OCI-LY7 (cell line): ENCODE measurements at regions of chr1 and their contacts with region 1.

Region 1: GRCh38 chr1:152189657-152190442 is 30.8 kb upstream of the RPTN start:
- DNase-seq: peak; percentile 48
- H3K4me3 ChIP-seq: no peak overlapping the region
- H3K27ac ChIP-seq: no peak overlapping the region
- H3K4me1 ChIP-seq: no peaks in the 10 kb centered on the region
- CTCF ChIP-seq: peak; percentile 86

Region 2: DNA sequence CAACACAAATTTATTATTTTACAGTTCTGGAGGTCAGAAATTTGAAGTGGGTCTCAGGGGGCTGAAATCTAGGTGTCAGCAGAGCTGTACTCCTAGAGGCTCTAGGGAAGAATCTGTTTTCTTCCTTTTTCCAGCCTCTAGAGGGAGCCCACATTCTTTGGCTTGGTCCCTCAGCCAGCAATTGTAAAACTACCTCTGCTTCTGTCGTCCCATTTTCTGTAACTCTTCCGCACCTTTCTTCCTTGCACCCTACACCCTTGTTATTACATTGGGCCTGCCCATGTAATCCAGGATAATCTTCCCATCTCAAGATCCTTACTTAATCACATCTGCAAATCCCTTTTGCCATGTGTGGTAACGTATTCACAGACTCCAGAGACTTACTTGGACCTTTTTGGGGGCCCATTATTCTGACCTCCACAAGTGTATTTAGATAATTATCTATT is 255.8 kb before region 1 on chr1:
- CTCF ChIA-PET with region 1: no interaction called
- POLR2A ChIA-PET with region 1: no interaction called
- intact Hi-C with region 1: loop called (anchors 10 kb)
- DNase-seq: peak; percentile 64
- H3K4me3 ChIP-seq: no peak overlapping the region
- H3K27ac ChIP-seq: no peak overlapping the region
- H3K4me1 ChIP-seq: peaks cover 6% of the 10 kb centered on the region
- CTCF ChIP-seq: peak; percentile 90

Region 3: GRCh38 chr1:152047730-152048402 is 142.0 kb before region 1 on chr1:
- CTCF ChIA-PET with region 1: interaction called, 3 read pairs
- POLR2A ChIA-PET with region 1: no interaction called
- intact Hi-C with region 1: loop called (anchors 1 kb)
- DNase-seq: peak; percentile 86
- H3K4me3 ChIP-seq: peak overlapping the region; percentile 14
- H3K27ac ChIP-seq: peak overlapping the region; percentile 63
- H3K4me1 ChIP-seq: peaks cover 17% of the 10 kb centered on the region
- CTCF ChIP-seq: peak; percentile 88

Region 4: GRCh38 chr1:152130186-152130585 is 59.7 kb before region 1 on chr1:
- CTCF ChIA-PET with region 1: no interaction called
- POLR2A ChIA-PET with region 1: no interaction called
- intact Hi-C with region 1: no loop called
- DNase-seq: no peak
- H3K4me3 ChIP-seq: no peak overlapping the region
- H3K27ac ChIP-seq: no peak overlapping the region
- H3K4me1 ChIP-seq: no peaks in the 10 kb centered on the region
- CTCF ChIP-seq: no peak

Region 5: DNA sequence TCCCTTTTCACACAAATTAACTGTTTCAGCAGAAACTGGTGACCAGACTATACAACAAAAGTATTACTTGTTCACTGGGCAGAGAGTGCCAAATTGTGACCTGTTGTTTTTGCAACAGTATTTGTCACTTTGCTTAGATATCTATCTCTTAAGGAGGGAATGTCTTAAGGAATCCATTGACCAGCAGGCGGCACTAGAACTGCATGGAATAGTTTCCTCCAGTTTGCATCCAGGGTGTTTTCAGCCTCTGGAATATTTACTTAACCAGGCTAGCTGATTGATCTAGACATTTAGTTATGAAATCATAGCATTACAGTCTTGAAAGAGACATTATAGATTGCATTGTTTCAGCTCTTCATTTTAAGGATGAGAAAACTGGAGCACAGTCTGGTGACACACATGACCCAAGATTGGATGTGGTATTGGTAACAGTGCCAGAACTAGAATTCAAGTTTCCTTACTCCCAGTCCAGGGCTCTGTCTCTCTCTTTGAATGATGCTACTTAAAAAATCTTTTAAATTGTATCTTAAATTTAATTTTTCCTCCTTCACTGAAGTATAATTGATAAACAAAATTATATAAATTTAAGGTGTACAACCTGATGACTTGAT is 47.8 kb before region 1 on chr1:
- CTCF ChIA-PET with region 1: no interaction called
- POLR2A ChIA-PET with region 1: no interaction called
- intact Hi-C with region 1: loop called (anchors 2 kb)
- DNase-seq: peak; percentile 24
- H3K4me3 ChIP-seq: no peak overlapping the region
- H3K27ac ChIP-seq: no peak overlapping the region
- H3K4me1 ChIP-seq: no peaks in the 10 kb centered on the region
- CTCF ChIP-seq: peak; percentile 79

Region 6: GRCh38 chr1:152218762-152219427 is 29.0 kb after region 1 on chr1:
- CTCF ChIA-PET with region 1: no interaction called
- POLR2A ChIA-PET with region 1: no interaction called
- intact Hi-C with region 1: no loop called
- DNase-seq: no peak
- H3K4me3 ChIP-seq: no peak overlapping the region
- H3K27ac ChIP-seq: no peak overlapping the region
- H3K4me1 ChIP-seq: no peaks in the 10 kb centered on the region
- CTCF ChIP-seq: no peak

Region 7: GRCh38 chr1:152440635-152441471 is 251.0 kb after region 1 on chr1:
- CTCF ChIA-PET with region 1: no interaction called
- POLR2A ChIA-PET with region 1: no interaction called
- intact Hi-C with region 1: loop called (anchors 5 kb)
- DNase-seq: peak; percentile 79
- H3K4me3 ChIP-seq: no peak overlapping the region
- H3K27ac ChIP-seq: no peak overlapping the region
- H3K4me1 ChIP-seq: no peaks in the 10 kb centered on the region
- CTCF ChIP-seq: peak; percentile 86

Region 8: GRCh38 chr1:152459596-152460528 is 270.0 kb after region 1 on chr1:
- CTCF ChIA-PET with region 1: interaction called, 5 read pairs
- POLR2A ChIA-PET with region 1: no interaction called
- intact Hi-C with region 1: loop called (anchors 1 kb)
- DNase-seq: peak; percentile 77
- H3K4me3 ChIP-seq: peak overlapping the region; percentile 9
- H3K27ac ChIP-seq: no peak overlapping the region
- H3K4me1 ChIP-seq: peaks cover 5% of the 10 kb centered on the region
- CTCF ChIP-seq: peak; percentile 96

Region 9: DNA sequence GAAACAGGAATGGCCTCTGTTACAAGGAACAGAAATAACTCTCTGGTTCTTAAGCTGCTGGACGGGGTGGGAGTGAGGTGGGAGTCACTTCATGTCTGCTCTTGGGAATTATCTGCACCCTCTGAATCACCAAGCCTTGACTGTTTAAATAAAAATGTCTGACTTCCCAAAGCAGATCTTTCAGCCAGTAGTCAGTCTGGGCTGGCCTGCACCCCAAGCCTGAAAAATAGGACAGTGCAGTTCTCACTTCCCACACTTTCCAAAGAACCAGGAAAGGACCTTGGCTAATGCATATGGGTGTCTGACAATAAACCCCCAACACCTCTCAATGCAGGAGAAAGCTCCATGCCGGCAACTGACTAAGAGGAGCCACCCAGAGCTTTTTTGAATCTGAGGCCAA is 1269.8 kb after region 1 on chr1:
- CTCF ChIA-PET with region 1: no interaction called
- POLR2A ChIA-PET with region 1: no interaction called
- intact Hi-C with region 1: no loop called
- DNase-seq: no peak
- H3K4me3 ChIP-seq: no peak overlapping the region
- H3K27ac ChIP-seq: no peak overlapping the region
- H3K4me1 ChIP-seq: no peaks in the 10 kb centered on the region
- CTCF ChIP-seq: no peak